Mammary epithelial cell (primary cell): ENCODE measurements at regions of chr10 and their contacts with region 1.

Region 1: DNA sequence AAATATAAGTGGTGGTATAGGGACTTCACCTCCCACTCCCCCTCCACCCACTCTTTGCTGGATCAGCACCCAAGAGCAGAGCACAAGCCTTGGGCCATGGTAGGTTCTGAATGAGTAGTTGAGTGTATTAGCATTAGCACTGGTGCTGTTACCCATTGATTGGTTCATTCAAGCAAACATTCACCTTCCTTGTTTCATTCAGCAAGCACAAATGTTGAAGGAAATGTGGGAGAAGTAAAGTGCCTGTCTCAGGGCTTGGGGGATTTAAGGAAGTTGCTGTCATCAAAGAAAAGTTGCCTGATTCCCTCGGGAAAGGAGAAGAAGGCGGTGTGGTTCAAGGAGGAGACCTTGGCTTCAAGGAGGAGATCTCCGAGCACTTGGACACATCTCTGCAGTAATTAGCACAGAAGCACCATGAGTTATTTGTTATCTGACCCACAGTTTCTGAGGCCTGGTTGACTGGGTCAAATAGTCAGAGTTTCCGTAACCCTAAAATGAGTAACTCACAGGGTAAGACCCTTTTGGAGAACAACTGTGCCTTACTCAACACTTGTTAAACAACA is 17.3 kb downstream of the IL2RA start:
- DNase-seq: no peak
- H3K4me3 ChIP-seq: no peak overlapping the region
- H3K27ac ChIP-seq: no peak overlapping the region
- H3K4me1 ChIP-seq: no peaks in the 10 kb centered on the region
- H3K27me3 ChIP-seq: no peaks in the 10 kb centered on the region
- CTCF ChIP-seq: no peak

Region 2: GRCh38 chr10:5889624-5890451 is 155.0 kb before region 1 on chr10 and contains the starts of genes ANKRD16 and FBH1:
- CTCF ChIA-PET with region 1: no interaction called
- dilution Hi-C with region 1: no loop called
- in situ Hi-C with region 1: no loop called
- intact Hi-C with region 1: no loop called
- DNase-seq: peak; percentile 99
- H3K4me3 ChIP-seq: peak within 1 kb of the TSS; percentile 84 to 98 (median 85)
- H3K27ac ChIP-seq: peak within 1 kb of the TSS; percentile 19
- H3K4me1 ChIP-seq: peaks cover 24% of the 10 kb centered on the region
- H3K27me3 ChIP-seq: no peaks in the 10 kb centered on the region
- CTCF ChIP-seq: no peak
- total RNA-seq, gene ANKRD16: 8.2 to 8.4 TPM
- total RNA-seq, gene FBH1: 62.7 to 77.3 TPM

Region 3: GRCh38 chr10:5968681-5969453 is 76.0 kb before region 1 on chr10:
- CTCF ChIA-PET with region 1: no interaction called
- dilution Hi-C with region 1: loop called (anchors 5 kb)
- in situ Hi-C with region 1: no loop called
- intact Hi-C with region 1: no loop called
- DNase-seq: no peak
- H3K4me3 ChIP-seq: no peak overlapping the region
- H3K27ac ChIP-seq: no peak overlapping the region
- H3K4me1 ChIP-seq: peaks cover 4% of the 10 kb centered on the region
- H3K27me3 ChIP-seq: no peaks in the 10 kb centered on the region
- CTCF ChIP-seq: no peak

Region 4: GRCh38 chr10:6002809-6003510 is 41.9 kb before region 1 on chr10:
- CTCF ChIA-PET with region 1: no interaction called
- dilution Hi-C with region 1: no loop called
- in situ Hi-C with region 1: no loop called
- intact Hi-C with region 1: no loop called
- DNase-seq: no peak
- H3K4me3 ChIP-seq: no peak overlapping the region
- H3K27ac ChIP-seq: no peak overlapping the region
- H3K4me1 ChIP-seq: no peaks in the 10 kb centered on the region
- H3K27me3 ChIP-seq: peaks cover 16% of the 10 kb centered on the region
- CTCF ChIP-seq: no peak

Region 5: DNA sequence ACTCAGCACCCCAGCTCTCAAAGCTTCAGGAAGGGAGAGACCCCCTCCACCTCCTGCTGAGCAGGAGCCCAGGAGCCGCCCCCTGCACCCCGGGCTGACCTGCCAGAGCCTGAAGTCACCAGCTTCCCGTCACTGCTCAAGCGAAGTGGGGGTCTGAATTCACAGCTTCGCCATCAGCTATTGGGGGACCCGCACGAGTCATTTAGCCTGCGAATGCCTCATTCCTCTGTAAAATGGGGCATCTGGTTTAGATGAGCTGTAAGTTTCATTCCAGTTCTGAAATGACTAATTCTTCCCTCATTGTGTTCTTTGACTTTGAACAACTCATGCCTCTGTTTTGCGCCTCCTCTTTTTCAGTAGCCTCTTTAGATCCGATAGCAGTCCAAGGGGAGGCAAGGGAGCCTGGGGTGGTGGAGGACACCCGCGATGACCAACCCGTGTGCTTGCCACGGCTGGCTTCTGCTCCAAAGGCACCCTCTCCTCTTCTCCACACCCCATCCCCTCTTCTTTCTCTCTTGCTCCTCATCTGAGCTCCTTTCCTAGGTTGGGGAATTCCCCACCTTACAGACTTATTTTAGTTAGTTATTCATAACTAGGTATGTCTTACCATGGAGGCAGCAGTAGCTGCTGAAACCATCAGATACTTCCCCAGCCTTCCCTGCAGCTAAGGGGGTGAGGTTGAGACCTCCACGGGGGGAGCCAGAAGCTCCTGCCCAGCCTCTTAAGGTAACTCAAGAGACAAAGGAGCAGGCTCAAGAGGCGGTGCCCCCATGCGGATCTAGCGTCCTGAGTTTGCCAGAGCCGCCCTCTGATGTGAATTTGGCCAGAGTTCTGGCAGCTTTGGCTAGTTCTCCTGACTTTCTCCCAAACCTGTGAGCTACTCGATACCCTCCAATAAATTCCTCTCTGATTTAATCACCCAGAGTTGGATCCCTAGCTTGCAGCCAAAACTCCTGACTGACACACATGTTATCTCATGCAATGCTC is 91.7 kb after region 1 on chr10:
- CTCF ChIA-PET with region 1: no interaction called
- dilution Hi-C with region 1: loop called (anchors 5 kb)
- in situ Hi-C with region 1: no loop called
- intact Hi-C with region 1: no loop called
- DNase-seq: peak; percentile 78
- H3K4me3 ChIP-seq: no peak overlapping the region
- H3K27ac ChIP-seq: no peak overlapping the region
- H3K4me1 ChIP-seq: peaks cover 8% of the 10 kb centered on the region
- H3K27me3 ChIP-seq: no peaks in the 10 kb centered on the region
- CTCF ChIP-seq: no peak